Activated B cell treated with CpG ODN at 0.5 μM for 24 hours (primary cell): ENCODE measurements at regions of chr2 and their contacts with region 1.

Region 1: DNA sequence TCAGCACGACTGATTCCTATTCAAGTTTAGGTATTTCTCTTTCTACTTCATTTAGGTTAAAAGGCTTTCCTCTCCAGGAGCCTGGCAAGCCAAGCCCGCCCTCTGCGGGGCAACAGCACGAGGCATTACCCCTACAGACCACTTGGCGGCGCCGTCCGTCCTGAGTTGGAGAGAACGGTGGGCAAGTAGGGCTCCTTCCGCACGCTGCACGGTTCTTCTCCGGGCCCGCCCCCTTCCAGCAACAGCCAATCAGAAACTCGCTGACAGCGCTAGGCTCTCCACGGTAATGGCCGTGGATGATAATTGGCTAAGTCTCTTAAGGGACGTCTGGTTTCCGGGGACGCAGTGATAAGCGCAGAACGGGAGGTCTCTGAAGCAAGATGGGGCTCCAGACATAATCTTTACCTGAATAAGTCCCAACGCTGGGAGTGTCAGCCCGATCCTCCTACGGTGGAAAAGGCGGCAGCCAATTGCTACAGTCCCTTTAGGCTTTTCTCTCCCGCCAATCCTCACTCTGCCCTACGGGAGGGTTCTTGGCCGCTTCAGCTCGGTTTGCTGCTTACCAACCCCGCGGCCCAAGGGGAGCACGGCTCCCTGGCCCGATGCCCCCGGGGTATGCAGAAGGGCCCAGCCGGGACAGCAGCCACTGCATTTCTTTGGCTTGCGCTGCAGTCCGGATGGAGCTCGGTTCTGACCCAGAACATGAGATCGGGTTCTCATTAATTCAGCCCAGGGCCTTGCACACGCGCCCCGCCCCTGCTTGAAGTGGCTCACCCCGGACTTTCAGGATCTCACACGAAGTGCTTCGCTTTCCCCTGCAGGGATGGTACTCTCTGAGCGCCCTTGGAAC is 206.9 kb upstream of the PKDCC start:
- DNase-seq: peak; percentile 88
- ATAC-seq: peak; percentile 98
- H3K4me3 Mint-ChIP-seq: peak overlapping the region; percentile 89
- H3K27ac Mint-ChIP-seq: peak overlapping the region; percentile 82
- H3K4me1 Mint-ChIP-seq: peaks cover 13% of the 10 kb centered on the region
- H3K27me3 Mint-ChIP-seq: peaks cover 24% of the 10 kb centered on the region
- CTCF ChIP-seq: peak; percentile 78

Region 2: DNA sequence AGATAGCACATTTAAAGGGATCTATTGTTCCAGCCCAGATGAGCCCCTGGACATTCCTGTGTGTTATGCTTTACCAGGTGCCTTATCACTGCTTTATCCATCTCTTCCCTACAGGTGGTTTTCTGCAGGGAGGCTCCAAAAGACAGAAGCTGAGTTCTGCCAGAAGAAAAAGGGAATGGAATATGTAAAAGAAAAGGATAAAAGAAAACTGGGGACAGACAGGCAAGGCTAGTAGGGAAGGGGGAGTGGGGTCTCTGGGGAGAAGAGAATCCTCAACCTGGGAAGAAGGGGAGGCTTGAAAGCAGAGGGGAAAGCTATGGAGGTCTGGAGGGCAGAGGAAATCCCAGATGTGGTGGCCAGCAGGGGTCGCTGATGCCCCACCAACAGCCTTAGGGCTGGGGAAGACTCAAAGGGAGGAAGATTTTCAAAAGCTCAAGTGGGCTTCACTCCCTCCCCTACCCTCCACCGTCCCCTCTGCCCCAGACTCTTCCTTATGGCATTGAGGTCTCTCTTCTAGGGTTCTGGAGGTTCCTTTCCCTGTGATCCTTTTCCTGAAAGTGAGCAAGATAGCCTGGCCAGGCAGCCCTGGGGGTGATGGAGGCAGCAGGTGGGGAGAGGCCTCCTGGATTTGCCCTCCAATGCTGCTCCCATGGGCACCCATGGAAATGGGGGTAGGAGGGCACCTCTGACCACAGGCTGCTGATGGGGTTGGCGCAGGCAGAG is 28.8 kb after region 1 on chr2:
- CTCF ChIA-PET with region 1: interaction called, 9 read pairs
- POLR2A ChIA-PET with region 1: no interaction called
- intact Hi-C with region 1: loop called (anchors 1 kb)
- DNase-seq: peak; percentile 69
- ATAC-seq: peak; percentile 75
- H3K4me3 Mint-ChIP-seq: no peak overlapping the region
- H3K27ac Mint-ChIP-seq: no peak overlapping the region
- H3K4me1 Mint-ChIP-seq: no peaks in the 10 kb centered on the region
- H3K27me3 Mint-ChIP-seq: peaks cover 16% of the 10 kb centered on the region
- CTCF ChIP-seq: peak; percentile 55

Region 3: DNA sequence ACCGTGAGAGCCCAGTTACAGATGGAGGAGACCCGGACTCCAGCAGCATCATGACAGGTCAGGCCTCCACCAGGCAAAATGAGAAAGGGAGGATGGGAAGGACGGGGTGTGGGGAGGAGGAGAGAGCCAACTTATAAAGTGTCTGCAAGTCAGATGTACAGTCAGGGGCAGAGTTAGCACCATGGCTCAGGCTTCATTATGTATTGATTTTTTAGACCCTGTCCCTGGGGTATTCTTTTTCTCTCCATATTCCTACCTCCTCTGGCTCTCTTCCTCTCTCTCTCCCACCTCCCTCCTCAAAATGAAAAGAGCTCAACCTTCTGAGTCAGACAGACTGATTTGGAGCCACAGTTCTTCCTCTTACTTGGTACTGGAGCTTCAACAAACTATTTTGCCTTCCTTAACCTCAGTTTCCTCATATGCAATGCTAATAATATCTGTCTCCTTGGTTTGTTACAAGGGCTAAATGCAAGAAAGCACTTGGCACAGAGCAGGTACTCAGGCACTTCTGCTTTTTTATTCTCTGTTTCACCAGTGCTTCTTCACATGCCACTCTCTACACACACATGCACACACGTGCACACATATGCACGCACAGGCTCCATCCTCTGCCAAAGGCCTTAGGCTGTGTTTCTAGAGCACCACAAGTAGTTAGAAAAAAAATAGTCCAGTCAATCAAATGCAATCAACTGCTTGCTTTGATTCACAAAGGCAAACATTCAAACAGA is 114.6 kb after region 1 on chr2:
- CTCF ChIA-PET with region 1: no interaction called
- POLR2A ChIA-PET with region 1: no interaction called
- intact Hi-C with region 1: loop called (anchors 1 kb)
- DNase-seq: no peak
- ATAC-seq: peak; percentile 54
- H3K4me3 Mint-ChIP-seq: no peak overlapping the region
- H3K27ac Mint-ChIP-seq: peak overlapping the region; percentile 51
- H3K4me1 Mint-ChIP-seq: peaks cover 38% of the 10 kb centered on the region
- H3K27me3 Mint-ChIP-seq: peaks cover 2% of the 10 kb centered on the region
- CTCF ChIP-seq: no peak

Region 4: GRCh38 chr2:42086500-42086953 is 245.6 kb after region 1 on chr2:
- CTCF ChIA-PET with region 1: interaction called, 18 read pairs
- POLR2A ChIA-PET with region 1: no interaction called
- intact Hi-C with region 1: loop called (anchors 1 kb)
- DNase-seq: no peak
- ATAC-seq: peak; percentile 71
- H3K4me3 Mint-ChIP-seq: no peak overlapping the region
- H3K27ac Mint-ChIP-seq: no peak overlapping the region
- H3K4me1 Mint-ChIP-seq: peaks cover 5% of the 10 kb centered on the region
- H3K27me3 Mint-ChIP-seq: peaks cover 8% of the 10 kb centered on the region
- CTCF ChIP-seq: peak; percentile 58

Region 5: DNA sequence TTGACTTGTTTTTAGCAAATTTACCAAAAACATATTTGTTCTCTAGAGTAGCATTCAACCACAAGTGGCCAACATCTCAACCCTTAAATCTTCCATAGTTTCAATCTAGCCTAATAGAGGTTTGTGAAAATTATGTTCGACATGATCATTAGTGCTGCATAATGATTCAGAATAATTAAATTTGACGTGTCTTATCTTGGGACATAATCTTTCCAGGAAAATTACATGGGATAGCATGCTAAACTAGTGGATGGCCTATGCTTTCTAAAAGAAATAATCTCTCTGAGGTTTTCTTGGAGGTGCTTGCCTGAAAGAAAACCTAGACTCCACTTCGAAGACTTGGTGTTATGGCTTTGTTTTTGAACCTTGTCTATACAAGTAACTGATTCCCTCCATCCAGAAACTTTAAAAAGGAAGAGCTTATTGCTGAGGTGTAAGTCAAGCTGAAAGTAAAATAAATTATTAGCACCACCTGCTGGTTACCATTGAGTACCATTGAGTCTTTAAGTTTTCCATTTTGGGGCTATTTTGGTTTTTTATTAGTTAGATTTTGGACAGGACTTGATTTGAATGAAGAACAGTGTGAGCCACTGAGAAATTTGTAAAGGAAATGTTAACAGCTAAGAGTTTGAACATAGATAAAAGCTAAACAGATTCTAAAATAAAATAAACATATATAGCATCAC is 487.4 kb after region 1 on chr2:
- CTCF ChIA-PET with region 1: no interaction called
- POLR2A ChIA-PET with region 1: no interaction called
- intact Hi-C with region 1: loop called (anchors 1 kb)
- DNase-seq: no peak
- ATAC-seq: no peak
- H3K4me3 Mint-ChIP-seq: no peak overlapping the region
- H3K27ac Mint-ChIP-seq: no peak overlapping the region
- H3K4me1 Mint-ChIP-seq: no peaks in the 10 kb centered on the region
- H3K27me3 Mint-ChIP-seq: no peaks in the 10 kb centered on the region
- CTCF ChIP-seq: no peak